Upper lobe of right lung (tissue), 1 donor: ENCODE measurements at regions of chr15 and their contacts with region 1.

Region 1: DNA sequence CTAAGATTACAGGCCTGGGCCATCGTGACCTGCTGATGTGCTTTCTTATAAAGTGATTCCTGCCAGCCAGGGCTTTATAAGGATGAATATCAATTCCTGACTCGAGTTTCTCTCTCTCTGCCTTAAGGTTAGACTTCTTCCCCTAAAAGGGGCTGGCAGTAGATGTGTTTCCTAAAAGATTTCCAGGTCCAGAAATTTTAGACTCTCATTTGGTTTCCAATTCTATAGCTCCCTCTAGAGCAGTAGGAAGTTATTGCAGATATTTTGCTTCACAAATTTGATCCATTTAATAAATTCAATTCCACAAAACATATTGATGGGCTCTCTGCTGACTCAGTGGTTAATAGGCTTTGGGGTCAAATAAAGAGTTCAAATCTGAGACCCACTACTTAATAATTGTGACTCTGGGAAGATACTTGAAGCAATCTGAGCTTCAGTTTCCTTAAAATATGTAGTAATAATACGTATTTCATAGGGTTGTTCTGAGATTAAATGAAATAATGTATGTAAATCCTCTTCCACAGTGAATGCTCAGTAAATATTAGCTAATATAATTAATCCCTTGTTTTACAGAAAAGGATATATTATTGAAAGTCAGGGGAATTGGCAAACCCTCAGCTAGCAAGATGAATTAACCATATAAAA is 2.1 kb downstream of the TRIM69 start:
- DNase-seq: no peak
- ATAC-seq: peak; percentile 76
- H3K4me3 ChIP-seq: no peak overlapping the region
- H3K27ac ChIP-seq: no peak overlapping the region
- H3K4me1 ChIP-seq: peaks cover 13% of the 10 kb centered on the region
- H3K27me3 ChIP-seq: no peaks in the 10 kb centered on the region
- CTCF ChIP-seq: peak; percentile 79

Region 2: GRCh38 chr15:44654858-44655257 is 83.6 kb before region 1 on chr15:
- intact Hi-C with region 1: loop called (anchors 10 kb)
- DNase-seq: no peak
- ATAC-seq: peak; percentile 71
- H3K4me3 ChIP-seq: no peak overlapping the region
- H3K27ac ChIP-seq: no peak overlapping the region
- H3K4me1 ChIP-seq: no peaks in the 10 kb centered on the region
- H3K27me3 ChIP-seq: no peaks in the 10 kb centered on the region
- CTCF ChIP-seq: no peak